Right cardiac atrium (tissue), 5 donors: ENCODE measurements at regions of chr18 and their contacts with region 1.

Region 1: DNA sequence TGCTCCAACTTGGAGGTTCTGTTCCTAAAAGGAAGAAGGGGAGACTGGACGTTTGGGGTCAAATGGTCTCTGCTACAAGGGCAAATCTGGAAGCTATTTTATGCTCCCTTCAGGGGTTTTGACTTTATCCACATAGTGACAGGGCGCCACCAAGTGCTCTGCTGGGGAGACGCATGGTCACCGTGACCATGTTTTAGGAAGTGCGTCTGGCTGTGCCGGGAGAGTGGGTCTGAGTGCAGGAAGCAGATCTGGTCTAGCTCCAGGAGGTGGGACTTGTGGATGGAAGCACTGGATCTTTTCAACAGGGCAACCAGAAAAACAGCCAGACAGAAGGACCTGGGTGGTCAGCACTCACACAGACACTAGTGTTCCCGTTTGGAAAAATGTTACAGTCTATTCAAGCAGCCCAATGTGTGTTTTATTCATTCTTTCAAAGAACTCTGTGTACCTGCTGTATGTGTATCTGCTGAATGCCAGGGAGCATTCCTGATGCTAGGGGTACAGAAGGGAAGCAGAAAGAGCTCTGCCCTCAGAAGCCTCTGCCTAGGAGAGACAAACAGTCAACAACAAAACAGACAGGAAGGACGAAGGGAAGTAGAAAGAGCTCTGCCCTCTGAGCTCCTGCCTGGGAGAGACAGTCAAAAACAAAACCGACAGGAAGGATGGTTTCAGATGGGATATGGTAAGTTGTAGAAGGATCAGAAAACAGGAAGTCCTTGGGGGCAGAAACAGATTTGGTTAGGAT is 14.3 kb downstream of the IMPA2 start:
- DNase-seq: peak; percentile 81 to 89 (median 88)
- ATAC-seq: peak; percentile 90 to 92
- H3K4me3 ChIP-seq: no peak overlapping the region
- H3K27ac ChIP-seq: peak overlapping the region; percentile 25
- H3K4me1 ChIP-seq: peaks cover 3% of the 10 kb centered on the region
- H3K27me3 ChIP-seq: no peaks in the 10 kb centered on the region

Region 2: GRCh38 chr18:11937874-11938478 is 57.6 kb before region 1 on chr18:
- intact Hi-C with region 1: loop called (anchors 2 to 5 kb)
- DNase-seq: peak; percentile 69 to 90 (median 84)
- ATAC-seq: peak; percentile 63 to 73
- H3K4me3 ChIP-seq: no peak overlapping the region
- H3K27ac ChIP-seq: no peak overlapping the region
- H3K4me1 ChIP-seq: no peaks in the 10 kb centered on the region
- H3K27me3 ChIP-seq: no peaks in the 10 kb centered on the region

Region 3: DNA sequence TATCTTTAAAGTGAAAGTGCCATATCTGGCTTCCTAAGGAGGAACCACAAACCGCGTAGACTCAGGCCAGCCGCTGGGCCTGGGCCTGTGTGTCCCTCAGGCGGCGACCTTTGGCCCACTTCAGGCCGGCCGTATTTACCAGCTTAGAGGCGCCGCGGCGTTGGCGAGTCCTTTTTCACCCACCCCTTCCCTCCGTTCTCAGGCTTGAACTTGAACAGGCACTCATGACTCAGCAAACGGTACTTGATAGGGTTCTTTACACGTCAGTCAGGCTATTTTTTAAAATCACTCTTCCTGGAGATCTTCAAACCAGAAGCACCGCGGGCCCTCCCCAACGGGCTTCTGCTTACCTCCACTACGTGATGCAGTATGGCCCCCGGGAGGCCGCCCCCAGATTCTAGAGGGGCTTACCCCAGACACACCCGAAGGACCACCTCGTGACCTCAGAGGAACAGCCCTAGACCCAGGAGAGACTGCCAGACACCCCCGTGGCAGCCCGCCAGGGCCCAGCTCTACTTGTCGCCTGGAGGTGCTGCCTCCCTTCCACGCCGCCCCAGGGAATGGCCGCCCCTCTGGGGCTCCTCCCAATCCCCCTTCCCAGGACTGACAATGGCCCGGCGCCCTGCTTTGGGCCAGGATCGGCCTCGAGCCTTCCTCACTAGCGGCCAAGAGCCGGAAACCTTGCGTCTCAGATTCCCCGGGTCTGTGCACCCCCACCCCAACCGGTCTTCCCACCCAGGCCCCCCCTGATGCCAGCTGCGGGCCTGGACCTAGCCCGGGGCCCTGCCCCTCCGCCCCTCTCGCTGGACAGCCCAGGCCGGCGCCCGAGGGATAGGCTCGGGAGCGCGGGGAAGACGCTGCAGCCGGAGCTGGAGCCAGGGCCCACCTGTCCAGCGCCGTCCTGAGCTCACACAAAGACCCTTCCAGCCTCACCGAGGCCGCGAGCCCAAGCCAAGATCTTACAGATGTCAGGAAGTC is 48.1 kb before region 1 on chr18:
- intact Hi-C with region 1: loop called in 1 of 4 experiments (anchors 5 kb)
- DNase-seq: peak; percentile 96 to 98 (median 97)
- ATAC-seq: peak; percentile 99
- H3K4me3 ChIP-seq: peak overlapping the region; percentile 52
- H3K27ac ChIP-seq: peak overlapping the region; percentile 91
- H3K4me1 ChIP-seq: no peaks in the 10 kb centered on the region
- H3K27me3 ChIP-seq: no peaks in the 10 kb centered on the region